ENCODE measurements at regions of chr16 and their contacts with region 1.

Region 1: DNA sequence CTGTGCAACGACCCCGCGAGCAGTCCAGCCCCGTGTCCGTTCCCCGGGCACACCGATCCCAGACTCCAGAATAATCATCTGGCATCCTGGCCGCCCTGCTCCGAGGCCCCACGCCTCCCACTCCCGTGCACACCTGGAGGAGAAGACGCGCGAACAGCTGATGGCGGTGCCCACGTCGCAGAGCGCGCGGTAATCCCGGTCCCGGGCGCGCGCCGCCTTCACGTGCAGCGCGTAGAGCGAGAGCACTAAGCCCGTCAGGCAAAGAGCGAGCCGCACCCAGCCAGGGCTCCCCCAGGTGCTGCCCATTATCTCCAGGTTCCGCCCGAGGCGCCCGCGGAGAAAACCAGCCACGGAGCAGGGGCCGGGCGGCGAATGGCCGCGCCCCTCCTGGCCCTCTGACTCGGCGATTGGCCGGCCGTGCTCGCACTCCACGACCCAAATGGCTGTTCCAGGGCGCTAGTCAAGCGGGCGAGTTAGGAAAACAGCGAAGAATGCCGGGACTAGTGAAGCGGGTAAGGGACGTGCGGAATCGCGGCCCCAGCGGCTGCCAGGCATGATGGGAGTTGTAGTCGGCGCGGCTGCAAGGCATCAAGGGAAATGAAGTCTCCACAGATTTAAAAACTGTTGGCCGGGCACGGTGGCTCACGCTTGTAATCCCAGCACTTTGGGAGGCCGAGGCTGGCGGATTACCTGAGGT is at the start of gene VKORC1:
- DNase-seq: peak; percentile 93
- H3K4me3 ChIP-seq: peak within 1 kb of the TSS; percentile 68 to 100
- H3K27ac ChIP-seq: peak within 1 kb of the TSS; percentile 73 to 78
- H3K4me1 ChIP-seq: peaks cover 4 to 16% of the 10 kb centered on the region in 2 experiments; a peak in 2 of 4 replicates
- H3K27me3 ChIP-seq: no peaks in the 10 kb centered on the region
- CTCF ChIP-seq: no peak
- EP300 ChIP-seq: peak in 1 of 2 experiments; percentile 29; a peak in 1 of 4 replicates
- RAD21 ChIP-seq: no peak
- polyA plus RNA-seq, gene VKORC1: 419 and 434 TPM in 2 replicates

Region 2: DNA sequence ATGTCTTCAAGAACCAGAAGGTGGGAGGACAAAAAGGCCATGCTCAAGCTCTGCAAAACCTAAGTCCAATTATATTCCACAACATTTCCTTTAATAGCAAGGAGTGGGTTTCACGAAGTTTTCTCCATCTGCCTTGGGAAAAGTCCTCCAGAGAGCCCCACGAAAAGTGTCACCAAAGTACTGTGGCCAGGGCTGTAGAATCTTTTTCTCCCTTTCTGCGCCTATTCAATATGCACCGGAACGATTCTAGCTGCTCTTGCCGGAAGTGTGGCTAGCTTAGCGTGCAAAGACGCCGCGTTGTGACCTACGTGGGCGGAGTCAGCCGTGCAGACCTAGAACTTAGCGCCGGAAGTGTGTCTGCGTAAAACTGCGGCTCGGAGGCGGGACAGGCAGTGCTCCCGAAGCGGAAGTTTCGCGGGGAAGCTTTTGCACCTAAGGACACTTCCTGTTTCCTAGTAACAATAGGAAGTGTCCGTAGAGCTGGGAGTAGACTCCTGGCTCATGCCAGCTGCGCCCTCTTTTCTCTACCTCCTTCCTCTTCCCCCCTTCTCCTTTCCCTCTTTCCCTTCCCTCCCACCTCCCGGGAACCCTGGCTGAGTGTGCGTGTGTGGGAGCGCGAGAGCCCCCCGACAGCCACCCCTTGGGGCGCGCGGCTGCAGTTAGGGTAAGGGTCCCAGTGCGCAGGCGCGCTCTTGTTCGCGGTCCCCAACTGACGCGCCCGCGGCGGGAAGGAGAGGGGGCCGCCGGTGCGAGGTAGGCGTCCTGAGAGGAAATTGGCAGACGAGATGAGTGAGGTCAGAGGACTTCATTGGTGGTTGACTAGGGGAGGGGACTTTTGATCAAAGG is 20.4 kb before region 1 on chr16 and contains the starts of genes ZNF646 and ZNF668:
- CTCF ChIA-PET with region 1: interaction called, 3 read pairs
- POLR2A ChIA-PET with region 1: interaction called, 11 read pairs
- DNase-seq: peak; percentile 92
- H3K4me3 ChIP-seq: peak within 1 kb of the TSS; percentile 90 to 95
- H3K27ac ChIP-seq: peak within 1 kb of the TSS; percentile 94 to 95
- H3K4me1 ChIP-seq: peaks cover 5 to 14% of the 10 kb centered on the region in 2 experiments; a peak in 3 of 4 replicates
- H3K27me3 ChIP-seq: no peaks in the 10 kb centered on the region
- CTCF ChIP-seq: no peak; the same call in 1 of the 2 replicates
- EP300 ChIP-seq: peak in 1 of 2 experiments; percentile 13; a peak in 1 of 4 replicates
- RAD21 ChIP-seq: no peak; the same call in 1 of the 2 replicates
- polyA plus RNA-seq, gene ZNF646: 2.7 and 3.4 TPM in 2 replicates
- polyA plus RNA-seq, gene ZNF668: 12.4 and 13.6 TPM in 2 replicates

Region 3: GRCh38 chr16:31179747-31180459 is 85.3 kb after region 1 on chr16 and contains the start of gene FUS:
- CTCF ChIA-PET with region 1: no interaction called
- POLR2A ChIA-PET with region 1: interaction called, 10 read pairs
- DNase-seq: peak; percentile 99
- H3K4me3 ChIP-seq: peak within 1 kb of the TSS; percentile 77 to 99
- H3K27ac ChIP-seq: peak within 1 kb of the TSS; percentile 95
- H3K4me1 ChIP-seq: peaks cover 9 to 15% of the 10 kb centered on the region in 2 experiments; a peak in 2 of 4 replicates
- H3K27me3 ChIP-seq: no peaks in the 10 kb centered on the region
- CTCF ChIP-seq: no peak
- EP300 ChIP-seq: peak in 1 of 2 experiments; percentile 53; a peak in 1 of 4 replicates
- RAD21 ChIP-seq: no peak
- polyA plus RNA-seq, gene FUS: 298 and 429 TPM in 2 replicates